B cell (primary cell): ENCODE measurements at regions of chr1 and their contacts with region 1.

Region 1: DNA sequence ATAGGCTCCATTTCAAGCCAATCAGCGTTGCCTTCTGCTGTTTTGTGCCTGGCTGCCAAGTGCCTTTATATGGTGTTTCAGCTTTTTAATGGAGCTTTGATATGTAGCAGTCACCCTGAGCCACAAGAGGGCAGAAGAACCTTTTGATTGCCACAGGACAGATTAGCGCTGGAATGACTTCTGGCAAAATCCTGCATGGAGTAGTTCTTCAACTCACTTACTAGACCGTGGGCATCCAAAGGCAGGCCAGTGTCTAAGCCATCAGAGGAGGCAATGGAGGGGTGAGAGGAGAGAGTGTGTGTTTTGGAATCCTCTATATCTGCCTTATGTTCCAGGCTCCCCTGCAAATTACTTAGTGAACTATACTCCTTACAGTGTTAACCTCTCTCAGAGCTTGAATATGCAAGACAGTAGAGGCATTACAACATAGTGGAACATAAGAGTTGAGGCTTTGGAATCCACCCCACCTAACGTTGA is 56.2 kb downstream of the ST3GAL3 start:
- DNase-seq: peak; percentile 66
- ATAC-seq: peak; percentile 60
- H3K4me3 ChIP-seq: no peak overlapping the region
- H3K4me3 Mint-ChIP-seq: no peak overlapping the region
- H3K27ac ChIP-seq: no peak overlapping the region
- H3K27ac Mint-ChIP-seq: no peak overlapping the region
- H3K4me1 ChIP-seq: no peaks in the 10 kb centered on the region
- H3K4me1 Mint-ChIP-seq: peaks cover 2% of the 10 kb centered on the region
- H3K27me3 ChIP-seq: no peaks in the 10 kb centered on the region
- H3K27me3 Mint-ChIP-seq: no peaks in the 10 kb centered on the region
- CTCF ChIP-seq: peak; percentile 77

Region 2: DNA sequence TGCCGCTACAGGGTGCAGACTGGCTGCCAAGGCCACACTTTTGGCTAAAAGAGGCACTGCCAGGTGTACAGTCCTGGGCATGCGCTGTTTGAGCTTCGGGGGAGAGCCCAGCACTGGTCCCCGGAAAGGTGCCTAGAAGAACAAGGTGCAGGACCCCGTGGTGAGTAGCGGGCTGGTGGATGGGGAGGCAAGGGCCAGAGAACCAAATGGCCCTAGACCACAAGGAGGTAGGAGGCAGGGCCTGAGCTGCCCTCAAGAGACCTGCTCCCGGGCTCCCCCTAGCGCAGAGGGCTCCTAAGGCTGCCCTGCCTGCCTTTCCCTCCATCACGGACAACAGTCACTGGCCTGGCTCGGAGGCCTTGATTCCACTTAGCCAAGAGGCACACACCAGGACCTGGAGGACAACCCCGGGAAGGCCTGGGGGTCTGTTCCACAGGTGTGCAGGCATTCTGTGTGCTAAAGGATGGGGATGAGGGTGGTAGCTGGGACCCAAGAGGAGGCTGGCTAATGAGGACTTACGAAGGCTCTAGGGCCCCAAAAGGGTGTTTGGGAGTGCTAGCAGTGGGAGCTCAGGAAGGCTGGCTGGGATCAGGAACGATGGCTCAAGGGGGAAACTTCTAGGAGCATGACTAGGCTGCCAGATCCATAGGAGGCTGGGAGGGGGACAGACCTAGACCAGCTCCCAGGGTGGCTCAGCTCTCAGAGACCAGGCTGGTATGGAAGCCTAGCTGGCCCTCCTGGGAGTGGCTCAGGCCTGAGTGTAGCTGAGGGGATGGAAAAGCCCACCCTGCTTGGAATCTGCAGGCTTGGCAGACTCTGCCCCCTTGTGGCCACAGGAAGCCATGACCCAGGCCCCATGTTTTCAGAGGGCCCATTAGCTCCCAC is 170.8 kb after region 1 on chr1:
- CTCF ChIA-PET with region 1: interaction called, 118 read pairs
- POLR2A ChIA-PET with region 1: interaction called, 3 read pairs
- intact Hi-C with region 1: no loop called
- DNase-seq: peak; percentile 66
- ATAC-seq: peak; percentile 59
- H3K4me3 ChIP-seq: no peak overlapping the region
- H3K4me3 Mint-ChIP-seq: peak overlapping the region; percentile 41
- H3K27ac ChIP-seq: no peak overlapping the region
- H3K27ac Mint-ChIP-seq: no peak overlapping the region
- H3K4me1 ChIP-seq: peaks cover 29 to 30% of the 10 kb centered on the region in 2 donors
- H3K4me1 Mint-ChIP-seq: peaks cover 21% of the 10 kb centered on the region
- H3K27me3 ChIP-seq: peaks cover 0 to 44% (median 26%) of the 10 kb centered on the region in 4 experiments
- H3K27me3 Mint-ChIP-seq: peaks cover 26% of the 10 kb centered on the region
- CTCF ChIP-seq: peak; percentile 69

Region 3: GRCh38 chr1:44044071-44044801 is 280.7 kb after region 1 on chr1:
- CTCF ChIA-PET with region 1: interaction called, 36 read pairs
- POLR2A ChIA-PET with region 1: no interaction called
- intact Hi-C with region 1: no loop called
- DNase-seq: no peak
- ATAC-seq: no peak
- H3K4me3 ChIP-seq: no peak overlapping the region
- H3K4me3 Mint-ChIP-seq: no peak overlapping the region
- H3K27ac ChIP-seq: no peak overlapping the region
- H3K27ac Mint-ChIP-seq: no peak overlapping the region
- H3K4me1 ChIP-seq: peaks cover 0 to 3% of the 10 kb centered on the region in 2 donors
- H3K4me1 Mint-ChIP-seq: peaks cover 6% of the 10 kb centered on the region
- H3K27me3 ChIP-seq: peaks cover 0 to 11% (median 0%) of the 10 kb centered on the region in 4 experiments
- H3K27me3 Mint-ChIP-seq: peaks cover 22% of the 10 kb centered on the region
- CTCF ChIP-seq: no peak

Region 4: DNA sequence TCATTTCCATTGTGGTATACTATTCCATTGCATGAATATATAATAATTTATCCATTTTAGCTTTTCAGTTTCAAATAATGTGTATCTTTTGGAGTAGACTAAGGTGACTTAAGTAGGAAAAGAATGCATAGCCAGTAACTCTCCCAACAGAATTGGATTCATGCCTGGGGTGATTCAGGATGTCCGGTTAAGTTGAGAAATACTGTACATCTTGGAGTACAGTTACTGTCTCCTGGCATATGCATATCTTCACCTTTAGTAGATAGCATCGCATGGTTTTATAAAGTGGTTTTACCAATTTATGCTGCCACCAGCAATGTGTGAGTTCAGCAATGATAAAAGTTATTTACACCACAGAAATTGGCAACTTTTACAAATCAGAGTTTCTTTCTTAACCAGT is 286.3 kb after region 1 on chr1:
- CTCF ChIA-PET with region 1: interaction called, 36 read pairs
- POLR2A ChIA-PET with region 1: no interaction called
- intact Hi-C with region 1: no loop called
- DNase-seq: no peak
- ATAC-seq: no peak
- H3K4me3 ChIP-seq: no peak overlapping the region
- H3K4me3 Mint-ChIP-seq: no peak overlapping the region
- H3K27ac ChIP-seq: no peak overlapping the region
- H3K27ac Mint-ChIP-seq: no peak overlapping the region
- H3K4me1 ChIP-seq: peaks cover 0 to 3% of the 10 kb centered on the region in 2 donors
- H3K4me1 Mint-ChIP-seq: peaks cover 6% of the 10 kb centered on the region
- H3K27me3 ChIP-seq: peaks cover 0 to 7% (median 0%) of the 10 kb centered on the region in 4 experiments
- H3K27me3 Mint-ChIP-seq: peaks cover 18% of the 10 kb centered on the region
- CTCF ChIP-seq: no peak